ENCODE measurements at regions of chr19 and their contacts with region 1.

Region 1: DNA sequence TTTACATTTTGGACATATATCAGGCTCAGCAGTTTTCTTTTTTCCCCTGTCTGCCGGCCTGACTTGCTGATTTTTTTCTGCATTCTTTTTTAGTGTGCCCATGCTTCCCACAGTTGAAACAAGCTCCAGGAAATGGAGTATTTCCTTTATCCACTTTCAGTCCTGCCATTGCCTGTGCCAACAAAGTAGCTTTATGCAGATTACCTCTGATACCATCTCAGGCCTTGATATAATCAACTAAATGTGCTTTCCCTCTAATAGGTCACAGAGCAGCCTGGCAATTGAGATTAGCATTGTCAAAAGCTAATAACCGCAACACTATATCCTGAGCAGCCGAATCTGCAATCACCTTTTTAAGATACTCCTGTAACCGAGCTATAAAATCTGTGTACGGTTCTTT is 9.2 kb downstream of the MRPS12 start:
- DNase-seq: no peak
- CTCF ChIP-seq: no peak

Region 2: DNA sequence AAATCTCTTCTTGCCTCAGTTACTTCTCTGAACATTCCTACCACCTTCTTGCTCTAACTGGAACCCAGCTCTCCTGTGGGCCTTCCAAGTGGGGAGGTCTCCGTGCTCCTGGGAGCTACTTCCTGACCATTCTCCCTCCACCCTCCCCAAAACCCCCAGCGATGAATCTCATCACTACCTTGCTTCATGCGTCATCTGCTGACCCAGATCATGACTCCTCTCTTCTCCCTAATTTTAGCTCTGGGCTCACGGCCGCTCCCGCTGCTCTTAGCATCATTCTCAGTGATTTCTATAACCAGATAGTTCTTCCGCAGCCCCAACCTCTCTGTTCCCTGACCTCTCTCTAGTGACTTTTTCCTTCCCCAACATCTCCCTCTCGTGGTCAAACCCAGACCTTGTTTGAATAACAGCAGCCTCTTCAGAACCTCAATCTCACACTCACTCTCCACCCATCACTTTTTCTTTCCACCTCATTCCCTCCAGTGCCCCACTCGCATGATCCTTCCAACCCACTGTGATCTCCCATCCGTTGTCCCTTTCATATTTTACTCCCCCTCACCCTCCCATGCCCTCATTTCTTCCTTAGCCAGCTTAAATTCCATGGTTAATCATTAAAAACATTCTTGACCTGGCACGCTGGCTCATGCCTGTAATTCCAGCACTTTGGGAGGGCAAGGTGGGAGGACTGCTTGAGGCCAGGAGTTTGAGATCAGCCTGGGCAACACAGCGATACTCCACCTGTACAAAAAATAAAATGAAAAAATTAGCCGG is 12.6 kb after region 1 on chr19:
- CTCF ChIA-PET with region 1: interaction called, 16 read pairs
- POLR2A ChIA-PET with region 1: interaction called, 3 read pairs
- DNase-seq: peak; percentile 72
- CTCF ChIP-seq: peak; percentile 70